ENCODE measurements at regions of chr3 and their contacts with region 1.

Region 1: GRCh38 chr3:123328851-123329635 is 119.8 kb downstream of the ADCY5 start:
- DNase-seq: peak; percentile 89
- ATAC-seq: peak; percentile 65

Region 2: GRCh38 chr3:123449102-123449996 is 120.3 kb after region 1 on chr3:
- intact Hi-C with region 1: loop called (anchors 5 kb)
- DNase-seq: peak; percentile 56
- ATAC-seq: peak; percentile 70

Region 3: DNA sequence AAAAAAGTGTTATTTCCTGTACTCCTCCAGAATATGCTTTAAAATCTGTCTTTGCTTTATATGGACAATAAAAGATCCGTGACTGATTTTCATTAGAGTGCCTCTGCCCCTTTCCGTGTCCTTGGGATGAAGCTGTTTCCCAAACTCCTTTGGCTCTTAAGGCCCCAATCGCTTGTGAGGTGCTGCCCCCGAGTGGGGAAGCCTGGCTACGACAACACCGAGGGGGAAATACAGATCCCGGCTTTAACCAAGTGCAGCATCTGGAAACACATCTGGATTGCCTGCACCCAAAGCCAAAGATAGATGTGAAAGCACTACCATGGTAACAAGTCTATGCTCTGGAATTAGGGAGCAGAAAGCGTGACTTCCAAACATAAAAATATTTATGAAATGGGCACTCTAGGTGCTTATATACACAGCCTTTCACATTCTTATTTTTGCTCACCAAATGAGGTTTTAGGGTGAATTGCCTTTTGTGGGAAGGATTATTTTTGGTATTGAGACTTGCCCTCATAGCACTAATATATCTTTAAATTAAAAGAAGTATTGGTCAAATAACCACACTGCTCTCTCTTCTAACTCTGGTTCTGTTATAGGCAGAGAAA is 160.5 kb after region 1 on chr3:
- intact Hi-C with region 1: loop called (anchors 2 kb)
- DNase-seq: peak; percentile 85
- ATAC-seq: peak; percentile 86

Region 4: GRCh38 chr3:123559040-123559861 is 230.2 kb after region 1 on chr3:
- intact Hi-C with region 1: loop called (anchors 5 kb)
- DNase-seq: no peak
- ATAC-seq: peak; percentile 64

Region 5: GRCh38 chr3:123605789-123606234 is 276.8 kb after region 1 on chr3:
- intact Hi-C with region 1: no loop called
- DNase-seq: no peak
- ATAC-seq: peak; percentile 30

Region 6: GRCh38 chr3:123678108-123678511 is 349.1 kb after region 1 on chr3:
- intact Hi-C with region 1: no loop called
- DNase-seq: no peak
- ATAC-seq: no peak